GM12878 (cell line): ENCODE measurements at regions of chr10 and their contacts with region 1.

Region 1: GRCh38 chr10:21953585-21954057 is 49.9 kb downstream of the DNAJC1 start:
- DNase-seq: no peak
- ATAC-seq: peak; percentile 88
- H3K4me3 ChIP-seq: no peak overlapping the region
- H3K27ac ChIP-seq: no peak overlapping the region
- H3K4me1 ChIP-seq: peaks cover 12% of the 10 kb centered on the region
- H3K27me3 ChIP-seq: no peaks in the 10 kb centered on the region
- CTCF ChIP-seq: peak; percentile 33 to 39 (median 37); a peak in 4 of 6 replicates
- EP300 ChIP-seq: no peak
- POLR2A ChIP-seq: no peak
- RAD21 ChIP-seq: peak; percentile 67

Region 2: GRCh38 chr10:21078410-21079329 is 875.0 kb before region 1 on chr10:
- CTCF ChIA-PET with region 1: no interaction called
- POLR2A ChIA-PET with region 1: no interaction called
- RAD21 ChIA-PET with region 1: interaction called, 3 read pairs
- SMC1A ChIA-PET with region 1: no interaction called
- in situ Hi-C with region 1: loop called (anchors 25 kb)
- intact Hi-C with region 1: loop called (anchors 5 kb)
- DNase-seq: no peak
- ATAC-seq: peak; percentile 89
- H3K4me3 ChIP-seq: no peak overlapping the region
- H3K27ac ChIP-seq: no peak overlapping the region
- H3K4me1 ChIP-seq: no peaks in the 10 kb centered on the region
- H3K27me3 ChIP-seq: no peaks in the 10 kb centered on the region; a peak in 2 of 4 replicates
- CTCF ChIP-seq: peak; percentile 68 to 69 (median 69)
- EP300 ChIP-seq: no peak
- POLR2A ChIP-seq: no peak
- RAD21 ChIP-seq: peak; percentile 74

Region 3: DNA sequence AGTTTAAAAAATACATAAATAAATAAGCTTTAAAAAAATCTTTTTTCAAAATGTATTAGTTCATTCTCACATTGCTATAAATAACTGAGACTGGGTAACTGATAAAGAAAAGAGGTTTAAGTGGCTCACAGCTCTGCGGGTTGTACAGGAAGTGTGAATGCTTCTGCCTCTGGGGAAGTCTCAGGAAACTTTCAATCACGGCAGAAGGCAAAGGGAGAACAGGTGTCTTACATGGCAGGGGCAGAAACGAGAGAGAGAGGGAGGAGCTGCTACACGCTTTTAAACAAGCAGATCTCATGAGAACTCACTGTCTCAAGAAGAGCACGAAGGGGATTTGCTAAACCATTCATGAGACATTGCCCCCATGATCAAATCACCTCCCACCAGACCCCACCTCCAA is 64.7 kb before region 1 on chr10:
- CTCF ChIA-PET with region 1: no interaction called
- POLR2A ChIA-PET with region 1: no interaction called
- RAD21 ChIA-PET with region 1: no interaction called
- SMC1A ChIA-PET with region 1: interaction called, 4 read pairs
- in situ Hi-C with region 1: no loop called
- intact Hi-C with region 1: loop called (anchors 2 kb)
- DNase-seq: peak; percentile 93
- ATAC-seq: peak; percentile 93
- H3K4me3 ChIP-seq: no peak overlapping the region
- H3K27ac ChIP-seq: peak overlapping the region; percentile 91
- H3K4me1 ChIP-seq: peaks cover 30% of the 10 kb centered on the region
- H3K27me3 ChIP-seq: no peaks in the 10 kb centered on the region
- CTCF ChIP-seq: no peak
- EP300 ChIP-seq: peak; percentile 70 to 91
- POLR2A ChIP-seq: no peak
- RAD21 ChIP-seq: no peak; the same call in 1 of the 2 replicates

Region 4: DNA sequence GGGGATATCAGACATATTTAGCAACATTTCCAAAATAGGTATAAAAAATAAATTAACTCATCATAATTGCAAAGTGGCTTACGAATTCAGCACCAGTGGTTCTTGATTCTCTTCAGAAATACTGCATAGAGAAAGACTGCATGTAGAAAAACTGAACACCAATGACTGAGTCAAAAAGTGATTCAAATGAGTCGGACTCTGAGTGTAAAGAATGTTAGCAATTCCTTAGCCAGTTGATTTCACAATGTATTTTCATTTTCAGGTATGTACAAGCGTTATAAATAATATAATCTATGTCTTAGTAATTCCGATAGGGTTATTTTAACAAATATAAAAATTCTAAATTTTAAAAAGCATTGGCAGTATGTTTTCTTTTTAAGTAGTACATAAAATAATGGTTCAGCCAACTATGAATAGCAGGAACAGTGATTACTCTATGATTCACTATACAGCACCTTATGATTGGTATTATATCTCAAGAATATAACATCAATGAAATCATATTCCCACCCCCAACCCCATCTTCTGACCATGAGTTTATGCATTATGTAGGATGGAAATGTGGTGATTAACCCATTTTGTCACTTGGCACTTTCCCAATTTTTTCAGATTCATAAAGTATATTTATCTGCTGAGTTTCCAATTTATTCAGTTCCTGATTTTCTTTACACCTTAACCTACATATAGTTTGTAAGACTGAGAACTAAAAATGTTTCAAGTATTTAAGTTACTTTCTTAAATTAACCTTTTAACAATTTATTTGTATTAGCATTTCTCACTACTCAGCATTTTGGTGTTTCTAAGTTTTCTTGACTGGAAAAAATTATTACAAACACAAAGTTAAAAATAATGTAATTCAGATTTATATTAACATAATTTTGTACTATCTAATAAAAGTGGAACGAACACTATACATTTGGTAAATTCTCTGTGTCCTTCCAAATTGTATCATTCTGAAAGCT is 16.0 kb after region 1 on chr10:
- CTCF ChIA-PET with region 1: no interaction called
- POLR2A ChIA-PET with region 1: no interaction called
- RAD21 ChIA-PET with region 1: no interaction called
- SMC1A ChIA-PET with region 1: no interaction called
- in situ Hi-C with region 1: no loop called
- intact Hi-C with region 1: no loop called
- DNase-seq: no peak
- ATAC-seq: no peak
- H3K4me3 ChIP-seq: no peak overlapping the region
- H3K27ac ChIP-seq: no peak overlapping the region
- H3K4me1 ChIP-seq: peaks cover 3% of the 10 kb centered on the region; the same call in 1 of the 2 replicates
- H3K27me3 ChIP-seq: no peaks in the 10 kb centered on the region
- CTCF ChIP-seq: no peak
- EP300 ChIP-seq: no peak
- POLR2A ChIP-seq: no peak
- RAD21 ChIP-seq: no peak